Left cardiac atrium (tissue), 4 donors: ENCODE measurements at regions of chr7 and their contacts with region 1.

Region 1: DNA sequence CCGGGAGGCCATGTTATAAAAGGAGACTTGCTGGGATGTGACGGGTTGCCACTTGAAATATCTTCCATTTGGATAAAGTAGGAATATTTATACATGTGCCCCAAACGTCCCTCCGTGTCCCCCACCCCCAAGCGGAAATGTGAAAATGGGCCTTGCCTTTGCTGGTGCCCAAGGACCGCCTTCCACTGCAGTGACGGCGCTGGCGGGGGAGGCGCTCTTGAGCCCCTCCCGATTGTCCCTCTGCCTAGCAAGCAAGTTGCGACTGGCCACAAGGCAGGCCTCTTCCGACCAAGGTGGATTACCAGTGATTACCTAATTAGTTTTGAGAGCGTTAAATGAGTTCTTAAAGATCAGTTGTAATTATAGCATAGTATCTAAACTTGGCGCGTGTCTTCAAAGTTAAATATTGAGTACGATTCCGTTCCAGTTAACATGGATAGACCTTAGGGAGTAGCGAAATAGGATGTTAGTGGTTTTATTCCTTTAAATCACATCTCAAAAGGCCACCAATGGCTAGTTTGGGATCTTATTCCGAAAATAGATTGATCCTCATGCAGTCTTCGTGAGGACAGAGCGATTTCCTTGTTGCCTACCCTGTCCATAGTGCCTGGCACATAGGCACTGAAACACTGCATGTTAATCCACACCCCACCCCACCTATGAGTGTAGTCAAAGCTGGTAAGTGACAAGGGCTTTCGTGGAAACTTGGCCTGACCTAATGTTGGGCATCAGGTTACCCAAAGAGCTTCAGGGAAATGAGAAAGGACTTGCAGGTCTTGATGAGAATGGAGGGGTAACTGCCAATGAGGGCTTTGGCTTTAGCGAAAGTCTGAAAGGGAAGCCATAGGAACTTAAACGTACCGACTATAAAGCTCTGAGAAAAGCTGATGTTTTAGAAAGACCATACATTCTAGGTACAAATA is 1.1 kb downstream of the PPIA start:
- DNase-seq: peak; percentile 90
- ATAC-seq: peak; percentile 81 to 82

Region 2: DNA sequence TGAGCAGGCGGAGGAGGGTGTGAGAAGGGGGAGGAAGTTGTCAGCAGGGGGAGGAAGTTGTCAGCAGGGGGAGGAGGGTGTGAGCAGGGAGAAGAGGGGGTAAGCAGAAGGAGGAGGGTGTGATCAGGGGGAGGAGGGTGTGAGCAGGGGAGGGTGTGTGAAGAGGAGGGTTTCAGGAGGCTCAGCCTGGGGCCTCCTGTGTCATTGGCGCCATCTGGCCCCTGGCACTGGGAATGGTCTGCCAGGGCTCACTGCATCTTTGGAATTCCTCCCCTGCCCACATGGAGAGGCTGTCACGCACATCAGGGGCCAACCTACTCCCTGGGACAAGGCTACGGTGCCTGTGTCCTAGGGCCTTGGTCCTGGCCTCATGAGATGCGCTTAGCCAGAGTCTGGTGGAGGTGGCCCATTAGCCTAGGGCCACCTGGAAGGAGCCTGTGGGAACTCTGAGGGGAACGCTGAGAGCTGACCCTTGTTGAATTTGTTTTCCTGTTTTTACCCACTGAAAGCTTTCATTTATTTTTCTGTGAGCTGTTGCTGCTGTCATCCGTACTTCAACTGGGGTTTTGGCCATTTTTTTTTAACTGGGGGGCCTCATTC is 490.2 kb before region 1 on chr7:
- intact Hi-C with region 1: no loop called
- DNase-seq: peak; percentile 49
- ATAC-seq: peak; percentile 60 to 62

Region 3: DNA sequence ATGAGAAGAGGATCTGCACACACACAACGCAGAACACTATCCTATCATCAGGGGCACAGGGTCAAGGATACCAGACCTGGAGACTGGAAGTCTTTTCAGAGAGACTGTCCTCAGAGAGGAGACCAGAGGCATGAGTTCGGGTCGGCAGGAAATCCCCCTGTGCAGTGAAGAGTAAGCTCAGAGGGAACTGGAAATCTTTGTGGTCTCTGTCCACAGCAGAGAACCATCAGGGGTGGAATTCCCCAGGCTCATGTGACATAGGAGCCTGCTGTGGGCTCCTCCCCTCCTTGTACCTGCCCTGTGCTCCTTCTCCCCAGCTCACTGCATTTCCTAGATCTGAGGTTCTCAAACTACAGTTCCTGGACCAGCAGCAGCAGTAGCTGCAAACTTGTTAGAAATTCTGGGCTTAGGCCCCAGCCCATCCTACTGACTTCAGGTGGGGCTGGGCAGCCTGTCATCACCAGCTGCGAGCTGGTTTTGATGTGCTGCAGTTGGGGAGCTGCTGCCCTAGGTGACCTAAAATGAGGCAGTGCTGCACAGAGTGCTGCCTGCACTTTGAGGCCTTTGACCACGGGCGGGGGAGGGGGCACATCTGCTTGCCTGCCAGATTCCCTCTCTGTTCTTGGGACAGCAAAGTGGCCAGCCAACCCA is 46.5 kb before region 1 on chr7:
- intact Hi-C with region 1: loop called in 1 of 2 experiments (anchors 5 kb)
- DNase-seq: no peak
- ATAC-seq: no peak

Region 4: DNA sequence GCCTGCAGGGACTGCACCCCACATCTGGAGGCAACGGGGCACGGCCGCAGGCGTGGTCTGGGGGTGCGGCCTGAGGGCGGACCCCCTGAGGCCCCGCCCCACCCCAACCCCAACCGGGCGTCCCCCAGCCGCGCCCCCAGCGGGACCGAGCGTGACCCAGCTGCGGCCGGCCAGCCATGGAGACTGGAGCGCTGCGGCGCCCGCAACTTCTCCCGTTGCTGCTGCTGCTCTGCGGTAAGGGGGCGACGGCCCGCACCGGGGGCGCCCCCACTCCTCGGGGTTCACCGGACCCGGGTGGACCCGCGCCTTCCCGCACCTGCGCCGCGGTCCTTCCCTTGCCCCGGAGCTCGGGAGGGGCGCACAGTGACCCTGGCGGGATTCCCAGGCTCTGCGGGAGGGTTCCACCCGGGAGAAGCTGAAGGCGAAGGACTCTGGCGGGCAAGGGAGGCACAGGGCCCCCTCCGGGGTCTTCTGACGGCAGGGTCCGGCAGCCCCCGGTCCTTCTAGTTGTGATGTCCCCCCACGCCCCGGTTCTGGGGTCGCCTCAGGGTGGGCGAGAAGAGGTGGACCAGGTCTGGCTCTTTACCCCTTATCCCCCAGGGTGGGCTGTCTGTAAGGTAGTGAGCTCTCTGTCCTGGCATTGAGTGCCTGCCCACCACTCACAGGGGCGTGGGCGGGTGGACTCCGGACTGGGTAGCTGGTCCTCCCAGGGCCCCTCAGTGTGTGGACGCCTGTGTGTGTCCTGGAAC is 360.2 kb after region 1 on chr7 and contains the start of gene RAMP3:
- intact Hi-C with region 1: no loop called
- DNase-seq: peak; percentile 58
- ATAC-seq: peak; percentile 35 to 60
- total RNA-seq, gene RAMP3: 40.8 to 55.0 TPM